PC-3 (cell line): ENCODE measurements at regions of chr15 and their contacts with region 1.

Region 1: GRCh38 chr15:43800286-43801141 is at the start of gene HYPK:
- DNase-seq: peak; percentile 85
- ATAC-seq: peak; percentile 67
- H3K4me3 ChIP-seq: peak within 1 kb of the TSS; percentile 100
- H3K27ac ChIP-seq: peak within 1 kb of the TSS; percentile 78
- H3K4me1 ChIP-seq: peaks cover 48% of the 10 kb centered on the region
- H3K27me3 ChIP-seq: no peaks in the 10 kb centered on the region
- CTCF ChIP-seq: no peak
- total RNA-seq, gene HYPK: 22.8 and 29.4 TPM in 2 replicates

Region 2: DNA sequence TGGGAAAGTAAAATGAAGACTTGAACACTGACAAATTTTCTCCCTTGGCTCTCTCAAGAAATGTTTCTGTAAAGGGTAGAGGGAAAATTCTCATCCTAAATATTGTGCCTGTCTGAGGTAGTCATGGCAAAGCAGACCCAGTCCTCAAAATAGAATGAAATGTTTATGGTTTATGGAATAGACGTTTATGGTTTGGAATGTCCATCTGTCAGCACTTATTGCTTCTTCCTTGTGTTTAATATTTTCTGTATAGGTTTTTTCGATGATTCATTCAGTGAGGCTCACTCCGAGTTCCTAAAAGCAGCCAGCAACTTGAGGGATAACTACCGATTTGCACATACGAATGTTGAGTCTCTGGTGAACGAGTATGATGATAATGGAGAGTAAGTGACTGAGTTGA is 37.7 kb before region 1 on chr15:
- CTCF ChIA-PET with region 1: no interaction called
- POLR2A ChIA-PET with region 1: no interaction called
- intact Hi-C with region 1: no loop called
- DNase-seq: no peak
- ATAC-seq: no peak
- H3K4me3 ChIP-seq: no peak overlapping the region
- H3K27ac ChIP-seq: no peak overlapping the region
- H3K4me1 ChIP-seq: no peaks in the 10 kb centered on the region
- H3K27me3 ChIP-seq: no peaks in the 10 kb centered on the region
- CTCF ChIP-seq: no peak

Region 3: DNA sequence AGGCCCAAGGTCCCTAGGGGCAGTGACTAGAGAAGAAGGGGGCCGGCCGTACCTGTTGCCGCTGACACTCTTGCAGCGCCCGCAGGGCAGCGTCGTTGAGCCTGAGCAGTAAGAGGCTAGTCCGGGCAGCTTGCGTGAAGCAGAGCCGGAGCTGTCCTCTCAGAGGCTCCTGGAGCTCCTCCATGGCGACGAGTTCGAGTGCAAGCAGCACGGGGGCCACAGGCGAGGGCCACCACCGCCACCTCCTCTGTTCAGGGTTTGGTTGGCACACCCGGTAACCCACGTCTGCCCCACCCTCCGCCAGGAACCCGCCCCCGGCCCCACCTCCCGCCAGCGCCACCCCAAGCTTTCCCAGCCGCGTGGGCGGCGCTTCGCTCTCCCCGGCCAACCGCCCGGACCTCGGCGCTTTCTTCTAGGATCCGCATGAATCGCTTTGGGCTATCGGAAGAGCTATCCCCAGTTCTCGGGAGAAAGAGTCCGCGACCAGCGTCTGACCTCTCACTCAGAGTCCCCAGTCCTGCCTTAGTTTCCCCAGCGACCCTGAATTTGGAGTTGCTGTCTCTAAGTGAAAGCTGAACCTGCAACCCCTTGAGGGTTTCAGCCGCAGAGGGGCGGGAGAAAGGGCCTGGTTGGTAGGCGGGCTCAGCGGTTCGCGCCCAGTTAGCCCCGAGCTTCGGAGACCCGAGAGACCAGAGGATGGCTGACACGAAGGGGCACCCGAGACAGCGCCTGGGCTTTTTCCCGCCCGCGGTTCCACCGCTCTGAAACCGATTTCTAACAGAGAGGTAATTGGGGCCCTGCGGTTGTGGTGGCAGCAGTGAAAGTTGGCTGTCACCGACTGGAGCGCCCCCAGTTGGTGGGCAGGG is 23.6 kb before region 1 on chr15 and contains the start of gene ELL3:
- CTCF ChIA-PET with region 1: interaction called, 3 read pairs
- POLR2A ChIA-PET with region 1: no interaction called
- intact Hi-C with region 1: loop called (anchors 1 kb)
- DNase-seq: peak; percentile 83
- ATAC-seq: peak; percentile 65
- H3K4me3 ChIP-seq: peak within 1 kb of the TSS; percentile 83
- H3K27ac ChIP-seq: peak within 1 kb of the TSS; percentile 63
- H3K4me1 ChIP-seq: peaks cover 17% of the 10 kb centered on the region; the same call in 1 of the 2 replicates
- H3K27me3 ChIP-seq: no peaks in the 10 kb centered on the region
- CTCF ChIP-seq: peak; percentile 94
- total RNA-seq, gene ELL3: 15.0 and 35.8 TPM in 2 replicates

Region 4: GRCh38 chr15:43824302-43825246 is 24.1 kb after region 1 on chr15 and contains the start of gene MFAP1:
- CTCF ChIA-PET with region 1: no interaction called
- POLR2A ChIA-PET with region 1: interaction called, 10 read pairs
- intact Hi-C with region 1: loop called (anchors 1 kb)
- DNase-seq: peak; percentile 97
- ATAC-seq: peak; percentile 75
- H3K4me3 ChIP-seq: peak within 1 kb of the TSS; percentile 91
- H3K27ac ChIP-seq: peak within 1 kb of the TSS; percentile 85
- H3K4me1 ChIP-seq: peaks cover 34% of the 10 kb centered on the region
- H3K27me3 ChIP-seq: no peaks in the 10 kb centered on the region
- CTCF ChIP-seq: no peak
- total RNA-seq, gene MFAP1: 18.5 and 18.6 TPM in 2 replicates

Region 5: GRCh38 chr15:43872416-43873020 is 72.0 kb after region 1 on chr15:
- CTCF ChIA-PET with region 1: no interaction called
- POLR2A ChIA-PET with region 1: interaction called, 6 read pairs
- intact Hi-C with region 1: loop called (anchors 10 kb)
- DNase-seq: peak; percentile 73
- ATAC-seq: peak; percentile 93
- H3K4me3 ChIP-seq: no peak overlapping the region
- H3K27ac ChIP-seq: no peak overlapping the region
- H3K4me1 ChIP-seq: no peaks in the 10 kb centered on the region
- H3K27me3 ChIP-seq: no peaks in the 10 kb centered on the region
- CTCF ChIP-seq: peak; percentile 82

Region 6: DNA sequence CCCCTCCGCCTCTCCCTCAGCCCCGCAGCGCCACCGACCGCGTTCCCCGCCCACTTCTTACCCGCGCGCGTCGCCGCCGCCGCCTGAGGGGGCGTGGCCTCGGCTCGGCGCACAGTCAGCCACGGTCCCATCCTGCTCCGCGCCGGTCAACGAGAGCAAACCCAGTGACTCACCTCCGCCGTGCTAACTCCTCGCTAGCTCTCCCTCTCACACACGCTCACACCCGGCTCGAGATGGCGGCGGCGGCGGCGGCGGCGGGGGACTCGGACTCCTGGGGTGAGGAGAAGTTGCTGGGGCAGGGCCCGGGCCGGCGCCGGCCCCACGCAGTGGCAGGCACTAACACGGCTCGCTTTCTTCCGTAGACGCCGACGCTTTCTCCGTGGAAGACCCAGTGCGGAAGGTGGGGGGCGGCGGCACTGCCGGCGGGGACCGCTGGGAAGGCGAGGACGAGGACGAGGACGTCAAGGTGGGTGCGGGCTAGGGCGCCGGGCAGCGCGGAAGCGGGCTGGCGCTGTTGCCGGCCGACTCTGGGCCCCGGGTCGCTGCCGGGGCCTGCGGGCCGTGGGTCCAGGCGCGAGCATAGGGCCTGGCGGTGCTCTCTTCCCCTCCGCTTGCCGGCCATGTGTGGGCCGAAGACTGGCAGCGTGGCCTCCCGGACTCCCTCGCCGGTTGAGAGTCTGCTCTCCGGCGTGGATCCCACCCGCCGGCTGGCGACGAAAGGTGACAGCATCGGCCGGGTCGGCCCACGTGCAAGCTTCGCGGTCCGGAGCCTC is 736.6 kb after region 1 on chr15 and contains the start of gene EIF3J:
- CTCF ChIA-PET with region 1: no interaction called
- POLR2A ChIA-PET with region 1: interaction called, 20 read pairs
- intact Hi-C with region 1: no loop called
- DNase-seq: peak; percentile 97
- ATAC-seq: peak; percentile 89
- H3K4me3 ChIP-seq: peak within 1 kb of the TSS; percentile 78
- H3K27ac ChIP-seq: peak within 1 kb of the TSS; percentile 85
- H3K4me1 ChIP-seq: peaks cover 33% of the 10 kb centered on the region
- H3K27me3 ChIP-seq: no peaks in the 10 kb centered on the region
- CTCF ChIP-seq: no peak
- total RNA-seq, gene EIF3J: 38.2 and 39.0 TPM in 2 replicates

Region 7: GRCh38 chr15:45198337-45199135 is 1398.0 kb after region 1 on chr15:
- CTCF ChIA-PET with region 1: no interaction called
- POLR2A ChIA-PET with region 1: no interaction called
- intact Hi-C with region 1: no loop called
- DNase-seq: peak; percentile 98
- ATAC-seq: peak; percentile 61
- H3K4me3 ChIP-seq: peak overlapping the region; percentile 92
- H3K27ac ChIP-seq: no peak overlapping the region
- H3K4me1 ChIP-seq: 0 out of 2 replicates have a peak, but pooled peaks cover 4% of the 10 kb centered on the region
- H3K27me3 ChIP-seq: no peaks in the 10 kb centered on the region
- CTCF ChIP-seq: peak; percentile 94